ENCODE measurements at regions of chr17 and their contacts with region 1.

Region 1: DNA sequence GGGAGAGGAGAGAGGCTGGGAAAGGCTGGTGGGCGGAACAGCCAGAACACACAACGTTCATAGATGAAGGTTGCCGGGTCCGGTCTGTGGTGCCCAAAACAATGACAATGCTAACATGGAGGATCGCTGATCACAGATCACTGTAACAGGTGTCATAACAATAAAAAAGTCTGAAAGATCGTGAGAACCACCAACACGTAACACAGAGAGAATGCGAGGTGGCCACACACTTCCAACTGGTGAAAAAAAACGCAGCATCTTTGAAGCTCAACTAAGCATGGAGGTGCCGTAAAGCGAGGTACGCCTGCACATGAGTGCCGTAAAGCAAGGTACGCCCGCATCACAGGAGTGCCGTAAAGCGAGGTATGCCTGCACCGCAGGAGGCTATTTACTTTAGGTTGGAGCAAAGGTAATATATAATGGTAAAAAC is 42.3 kb downstream of the ABR start:
- DNase-seq: no peak
- ATAC-seq: no peak
- H3K4me3 ChIP-seq: no peak overlapping the region
- H3K27ac ChIP-seq: no peak overlapping the region
- H3K4me1 ChIP-seq: peaks cover 0 to 5% of the 10 kb centered on the region in 2 donors
- H3K27me3 ChIP-seq: no peaks in the 10 kb centered on the region

Region 2: DNA sequence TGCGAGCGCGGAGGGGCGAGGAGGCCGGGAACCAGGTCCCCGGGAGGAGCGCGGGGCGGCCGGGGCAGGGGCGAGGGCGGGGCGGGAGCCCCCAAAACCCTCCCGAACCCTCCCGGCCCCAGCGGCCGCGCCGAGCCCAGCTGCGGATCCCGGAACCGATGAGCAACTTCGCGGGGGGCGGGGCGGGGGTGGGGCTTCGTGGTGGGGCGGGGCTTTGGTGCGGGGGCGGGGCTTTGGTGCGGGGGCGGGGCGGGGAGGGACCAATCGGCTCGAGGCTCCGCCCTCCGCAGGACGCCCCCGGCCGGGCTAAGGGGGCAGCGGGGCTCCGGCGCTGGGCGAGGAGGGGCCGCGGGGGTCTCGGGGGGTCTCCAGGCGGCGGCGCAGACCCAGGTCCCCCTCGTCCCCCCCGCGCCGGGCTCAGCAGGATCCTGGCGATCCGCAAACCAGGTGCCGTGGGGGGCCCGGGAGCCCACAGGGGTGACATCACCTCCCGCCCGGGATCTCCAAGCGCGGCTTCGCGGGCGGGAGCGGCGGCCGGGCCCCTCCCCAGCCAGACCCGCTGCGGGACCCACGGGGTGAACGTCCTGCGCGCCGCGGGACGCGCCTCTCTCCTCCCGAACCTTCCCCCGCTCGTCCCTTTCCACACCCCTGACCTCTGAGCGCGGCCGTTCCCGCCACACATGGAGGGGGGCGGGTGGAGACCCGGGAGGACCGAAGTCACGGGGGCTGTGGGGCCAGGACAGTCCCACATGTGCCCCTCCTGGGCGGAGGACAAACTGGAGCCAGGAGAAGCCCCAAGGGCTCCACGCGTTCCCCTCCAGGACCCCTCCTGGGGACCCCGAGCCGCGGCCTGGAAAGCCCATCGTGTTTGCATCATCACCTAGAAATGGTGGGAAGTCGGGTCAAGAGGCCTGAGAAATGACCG is 42.6 kb after region 1 on chr17 and contains the start of gene ABR:
- intact Hi-C with region 1: loop called in 1 of 2 experiments (anchors 5 kb)
- DNase-seq: peak; percentile 72 to 90
- ATAC-seq: peak; percentile 67
- H3K4me3 ChIP-seq: peak within 1 kb of the TSS; percentile 75 to 91
- H3K27ac ChIP-seq: peak within 1 kb of the TSS in 1 of 2 donors; percentile 5
- H3K4me1 ChIP-seq: no peaks in the 10 kb centered on the region
- H3K27me3 ChIP-seq: no peaks in the 10 kb centered on the region
- total RNA-seq, gene ABR: 167 to 172 TPM

Measured in aorta (tissue), 5 donors.